HEK293T (cell line): ENCODE measurements at regions of chr17 and their contacts with region 1.

Region 1: DNA sequence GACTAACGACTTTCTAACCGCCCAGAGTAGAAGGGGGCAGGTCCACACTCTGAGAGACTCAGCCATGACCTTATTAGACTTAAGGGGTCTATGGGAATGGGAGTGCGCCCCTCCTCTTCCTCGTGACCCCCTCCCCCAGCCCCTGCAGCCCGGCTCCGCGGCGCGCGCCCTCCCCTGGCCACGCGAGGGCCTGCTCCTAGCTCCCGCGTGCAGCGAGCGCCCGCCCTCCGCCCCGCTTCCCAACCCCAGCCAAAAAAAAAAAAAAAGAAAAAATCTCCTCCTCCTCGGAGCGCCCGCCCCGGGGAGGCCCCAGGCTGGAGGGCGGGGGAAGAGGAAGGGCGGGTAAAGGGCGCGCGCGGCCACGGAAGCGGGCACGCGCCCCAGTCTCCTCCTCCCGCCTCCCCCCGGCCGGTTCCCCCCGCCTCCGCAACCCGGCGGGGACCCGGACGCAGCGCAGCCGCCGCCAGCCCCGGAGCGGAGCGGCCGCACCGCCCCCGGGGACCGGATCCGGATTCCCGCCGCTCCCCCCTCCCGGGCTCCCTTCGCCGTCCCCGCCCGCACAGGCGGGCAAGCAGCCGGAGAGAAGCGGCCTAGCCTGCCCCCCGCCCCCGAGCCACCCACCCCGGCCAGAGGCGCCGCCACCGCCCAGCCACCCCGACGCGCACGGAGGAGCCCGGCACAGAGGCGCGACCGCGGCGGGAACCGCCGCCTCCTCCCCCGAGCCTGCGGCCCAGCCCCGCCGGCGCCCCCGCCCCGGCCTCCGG is 949 bp downstream of the UBTF start:
- DNase-seq: peak; percentile 86

Region 2: DNA sequence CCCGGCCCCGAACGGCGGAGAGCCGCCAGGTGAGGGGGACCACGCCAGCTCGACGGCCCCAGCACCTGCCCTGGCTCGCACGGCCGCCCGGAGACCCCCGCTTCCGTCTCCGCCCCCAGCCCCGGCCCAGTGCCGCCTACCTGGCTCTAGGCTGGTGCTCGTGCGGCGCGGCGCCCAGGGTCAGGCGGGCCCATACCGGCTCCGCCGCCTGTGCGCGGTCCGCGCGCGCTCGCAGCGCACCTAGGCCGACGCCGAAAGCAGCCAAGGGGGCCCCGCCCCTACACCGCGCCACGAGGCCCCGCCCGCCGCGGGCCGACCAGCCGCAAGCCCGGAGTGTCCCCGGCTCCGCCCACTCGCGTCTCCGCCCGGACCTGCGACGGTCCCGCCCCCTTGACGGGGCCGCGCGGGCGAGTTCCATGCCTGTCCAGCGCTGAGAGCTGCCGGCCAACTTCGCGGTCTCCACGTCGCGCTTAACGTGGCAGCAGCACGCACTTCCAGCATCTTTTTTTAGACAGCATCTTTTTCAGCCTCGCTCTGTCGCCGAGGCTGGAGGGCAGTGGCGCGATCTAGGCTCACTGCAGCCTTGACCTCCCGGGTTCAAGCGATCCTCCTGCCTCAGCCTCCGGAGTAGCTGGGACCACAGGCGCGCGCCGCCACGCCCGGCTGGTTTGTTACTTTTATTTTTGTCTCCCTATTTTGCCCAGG is 106.2 kb after region 1 on chr17 and contains the start of gene SLC25A39:
- CTCF ChIA-PET with region 1: interaction called, 3 read pairs
- POLR2A ChIA-PET with region 1: interaction called, 11 read pairs
- DNase-seq: peak; percentile 92